Natural killer cell (primary cell): ENCODE measurements at regions of chr15 and their contacts with region 1.

Region 1: DNA sequence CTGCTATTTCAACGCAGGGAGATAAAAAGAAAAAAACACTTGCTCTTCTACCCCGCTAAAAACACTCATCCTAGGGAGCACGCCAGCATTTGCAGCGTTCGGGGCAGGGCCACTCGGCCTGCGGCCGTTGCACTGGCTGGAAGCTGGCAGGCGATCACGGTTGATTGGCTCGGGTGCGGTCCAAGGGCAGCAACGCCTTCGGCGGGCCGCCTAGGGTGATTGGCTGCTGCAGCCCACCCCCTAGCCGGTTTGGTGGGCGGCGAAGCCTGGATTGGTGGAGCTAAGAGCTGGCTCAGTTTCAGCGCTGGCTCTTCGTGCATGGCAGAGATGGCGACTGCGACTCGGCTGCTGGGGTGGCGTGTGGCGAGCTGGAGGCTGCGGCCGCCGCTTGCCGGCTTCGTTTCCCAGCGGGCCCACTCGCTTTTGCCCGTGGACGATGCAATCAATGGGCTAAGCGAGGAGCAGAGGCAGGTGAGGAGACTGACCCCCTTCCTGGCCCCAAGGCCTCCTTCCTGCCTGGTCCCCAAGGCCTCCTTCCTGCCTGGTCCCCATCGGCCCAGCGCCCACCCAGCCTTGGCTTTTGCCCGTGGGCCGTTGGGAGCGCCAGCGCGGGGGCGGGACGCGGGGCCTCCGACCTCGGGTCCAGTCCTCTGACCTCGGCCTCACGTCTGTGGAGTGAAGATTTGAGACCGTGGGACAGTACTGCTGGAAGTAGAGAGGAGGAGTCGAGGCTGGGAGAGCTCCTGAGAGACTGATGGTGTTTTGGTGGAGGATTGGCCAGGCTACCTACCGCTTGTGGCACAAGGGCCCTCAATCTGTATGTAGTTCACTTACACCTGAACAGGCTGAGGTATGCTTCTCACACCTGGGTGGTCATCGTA is at the start of gene IVD:
- DNase-seq: peak; percentile 85 to 93
- ATAC-seq: peak; percentile 99 to 100 (median 99)
- H3K4me3 ChIP-seq: peak within 1 kb of the TSS; percentile 73
- H3K4me3 Mint-ChIP-seq: peak within 1 kb of the TSS; percentile 93
- H3K27ac ChIP-seq: peak within 1 kb of the TSS; percentile 54
- H3K27ac Mint-ChIP-seq: peak within 1 kb of the TSS; percentile 73 to 87
- H3K4me1 ChIP-seq: peaks cover 20% of the 10 kb centered on the region
- H3K4me1 Mint-ChIP-seq: peaks cover 27 to 28% of the 10 kb centered on the region in 2 donors
- H3K27me3 ChIP-seq: no peaks in the 10 kb centered on the region
- H3K27me3 Mint-ChIP-seq: no peaks in the 10 kb centered on the region
- CTCF ChIP-seq: no peak
- total RNA-seq, gene IVD: 56.2 to 76.8 (median 67.3) TPM

Region 2: DNA sequence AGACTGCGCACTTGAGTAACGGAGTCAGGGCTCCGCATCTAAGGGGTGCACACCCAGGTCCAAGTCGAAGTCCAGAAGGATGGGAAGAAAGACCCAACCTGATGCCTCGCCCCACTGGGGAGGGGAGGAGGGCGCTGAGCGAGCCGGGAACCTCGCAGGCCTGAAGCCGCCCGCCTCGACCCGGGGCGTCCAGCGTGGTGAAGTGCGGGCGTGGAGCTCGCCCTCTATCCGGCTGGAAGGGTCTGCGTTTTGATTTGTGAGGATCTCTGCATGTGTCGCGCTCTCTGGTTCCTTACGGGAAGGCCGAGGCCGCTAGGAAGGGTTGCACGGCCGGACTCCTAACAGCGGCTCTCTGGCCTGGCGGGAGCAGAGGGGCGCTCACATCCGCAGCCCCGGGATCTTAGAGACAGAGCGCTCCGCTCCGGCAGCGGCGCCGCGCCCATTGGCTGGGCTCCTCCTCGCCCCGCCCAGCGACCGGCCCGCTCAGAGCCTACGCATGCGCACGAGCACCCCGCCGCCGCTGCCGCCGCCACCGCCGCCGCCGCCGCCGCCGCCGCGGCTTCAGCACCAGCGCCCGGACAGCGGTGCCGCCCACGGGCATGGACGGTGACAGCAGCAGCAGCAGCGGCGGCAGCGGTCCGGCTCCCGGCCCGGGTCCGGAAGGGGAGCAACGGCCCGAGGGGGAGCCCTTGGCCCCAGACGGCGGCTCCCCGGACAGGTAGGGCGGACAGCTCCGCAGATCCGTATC is 47.8 kb before region 1 on chr15 and contains the start of gene DISP2:
- intact Hi-C with region 1: loop called (anchors 1 kb)
- DNase-seq: peak; percentile 88 to 94
- ATAC-seq: peak; percentile 87 to 94 (median 93)
- H3K4me3 ChIP-seq: peak within 1 kb of the TSS; percentile 54
- H3K4me3 Mint-ChIP-seq: peak within 1 kb of the TSS; percentile 85
- H3K27ac ChIP-seq: no peak within 1 kb of the TSS
- H3K27ac Mint-ChIP-seq: peak within 1 kb of the TSS; percentile 23 to 75
- H3K4me1 ChIP-seq: peaks cover 18% of the 10 kb centered on the region
- H3K4me1 Mint-ChIP-seq: peaks cover 11 to 27% of the 10 kb centered on the region in 2 donors
- H3K27me3 ChIP-seq: no peaks in the 10 kb centered on the region
- H3K27me3 Mint-ChIP-seq: peaks cover 0 to 9% of the 10 kb centered on the region in 2 donors
- CTCF ChIP-seq: no peak
- total RNA-seq, gene DISP2: 0.20 to 1.0 (median 0.26) TPM

Region 3: DNA sequence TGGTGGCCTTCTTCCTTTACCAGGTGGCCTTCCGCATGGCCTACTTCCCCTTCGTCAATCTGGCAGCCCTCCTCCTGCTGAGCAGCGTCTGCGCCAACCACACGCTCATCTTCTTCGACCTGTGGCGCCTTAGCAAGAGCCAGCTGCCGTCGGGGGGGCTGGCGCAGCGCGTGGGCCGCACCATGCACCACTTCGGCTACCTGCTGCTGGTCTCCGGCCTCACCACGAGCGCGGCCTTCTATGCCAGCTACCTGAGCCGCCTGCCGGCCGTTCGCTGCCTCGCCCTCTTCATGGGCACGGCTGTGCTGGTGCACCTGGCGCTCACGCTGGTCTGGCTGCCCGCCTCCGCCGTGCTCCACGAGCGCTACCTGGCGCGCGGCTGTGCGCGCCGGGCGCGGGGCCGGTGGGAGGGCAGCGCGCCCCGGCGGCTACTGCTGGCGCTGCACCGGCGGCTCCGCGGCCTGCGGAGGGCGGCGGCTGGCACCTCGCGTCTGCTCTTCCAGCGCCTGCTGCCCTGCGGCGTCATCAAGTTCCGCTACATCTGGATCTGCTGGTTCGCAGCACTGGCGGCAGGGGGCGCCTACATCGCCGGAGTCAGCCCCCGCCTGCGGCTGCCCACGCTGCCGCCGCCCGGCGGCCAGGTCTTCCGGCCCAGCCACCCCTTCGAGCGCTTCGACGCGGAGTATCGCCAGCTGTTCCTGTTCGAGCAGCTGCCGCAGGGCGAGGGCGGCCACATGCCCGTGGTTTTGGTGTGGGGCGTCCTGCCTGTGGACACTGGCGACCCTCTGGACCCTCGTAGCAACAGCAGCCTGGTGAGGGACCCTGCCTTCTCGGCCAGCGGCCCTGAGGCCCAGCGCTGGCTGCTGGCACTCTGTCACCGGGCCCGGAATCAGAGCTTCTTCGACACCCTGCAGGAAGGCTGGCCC is 37.8 kb before region 1 on chr15:
- intact Hi-C with region 1: loop called (anchors 1 kb)
- DNase-seq: peak; percentile 85 to 95
- ATAC-seq: peak; percentile 96 to 98 (median 97)
- H3K4me3 ChIP-seq: peak overlapping the region; percentile 64
- H3K4me3 Mint-ChIP-seq: peak overlapping the region; percentile 91
- H3K27ac ChIP-seq: peak overlapping the region; percentile 68
- H3K27ac Mint-ChIP-seq: peak overlapping the region; percentile 84 to 91
- H3K4me1 ChIP-seq: peaks cover 31% of the 10 kb centered on the region
- H3K4me1 Mint-ChIP-seq: peaks cover 18 to 33% of the 10 kb centered on the region in 2 donors
- H3K27me3 ChIP-seq: no peaks in the 10 kb centered on the region
- H3K27me3 Mint-ChIP-seq: no peaks in the 10 kb centered on the region
- CTCF ChIP-seq: peak; percentile 94

Region 4: GRCh38 chr15:40382580-40383456 is 22.9 kb before region 1 on chr15 and contains the start of gene KNSTRN:
- intact Hi-C with region 1: loop called (anchors 1 kb)
- DNase-seq: peak; percentile 85 to 96
- ATAC-seq: peak; percentile 99
- H3K4me3 ChIP-seq: peak within 1 kb of the TSS; percentile 82
- H3K4me3 Mint-ChIP-seq: peak within 1 kb of the TSS; percentile 99
- H3K27ac ChIP-seq: no peak within 1 kb of the TSS
- H3K27ac Mint-ChIP-seq: peak within 1 kb of the TSS; percentile 80 to 86
- H3K4me1 ChIP-seq: peaks cover 10% of the 10 kb centered on the region
- H3K4me1 Mint-ChIP-seq: peaks cover 14% of the 10 kb centered on the region in 2 donors
- H3K27me3 ChIP-seq: no peaks in the 10 kb centered on the region
- H3K27me3 Mint-ChIP-seq: peaks cover 0 to 5% of the 10 kb centered on the region in 2 donors
- CTCF ChIP-seq: no peak
- total RNA-seq, gene KNSTRN: 5.4 to 7.6 (median 5.6) TPM